Left cardiac atrium (tissue), 4 donors: ENCODE measurements at regions of chr5 and their contacts with region 1.

Region 1: DNA sequence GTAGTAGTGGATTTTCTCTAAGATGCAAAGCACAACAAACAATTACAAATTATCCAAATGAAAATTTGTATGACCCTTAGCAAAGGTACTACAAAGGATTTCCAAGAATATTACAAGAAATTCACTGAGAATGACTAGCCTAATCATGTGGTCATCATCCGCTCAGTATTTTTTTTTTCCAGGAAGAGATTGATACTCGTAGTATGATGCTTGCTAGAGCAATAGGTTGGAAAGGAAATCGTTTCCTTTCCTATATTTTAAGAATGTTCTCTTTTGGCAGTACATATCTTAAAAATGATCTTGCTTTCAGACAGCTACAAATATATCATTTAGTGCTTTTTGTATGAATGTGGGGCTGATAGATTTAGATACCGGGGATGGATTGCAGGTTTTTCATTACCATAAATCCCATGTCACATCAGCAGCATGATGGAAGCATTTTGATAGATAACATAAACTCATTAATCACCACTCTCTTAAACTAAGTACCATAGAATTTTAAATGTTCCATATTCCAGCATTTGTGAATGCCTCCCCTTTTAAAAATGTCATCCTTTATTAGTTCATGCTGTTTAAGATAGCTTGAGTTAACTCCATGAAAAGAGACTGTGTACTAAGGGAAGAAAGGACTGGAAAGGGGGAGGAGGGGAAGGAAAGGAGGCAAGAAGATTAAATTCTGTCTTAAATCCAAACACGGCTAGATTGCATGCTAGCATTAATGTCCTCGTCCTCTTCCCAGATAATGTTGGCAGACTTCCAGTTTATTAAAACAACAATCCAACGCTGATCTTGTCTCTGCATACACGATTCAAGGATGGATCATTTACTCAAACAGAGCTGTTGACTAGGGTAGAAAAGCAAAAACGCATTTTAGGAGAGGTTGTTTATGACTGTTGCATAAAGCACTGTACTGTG is 311.7 kb upstream of the ZNF608 start:
- DNase-seq: no peak
- ATAC-seq: peak in 1 of 2 donors; percentile 38

Region 2: GRCh38 chr5:125180209-125180829 is 122.2 kb after region 1 on chr5:
- intact Hi-C with region 1: loop called in 1 of 2 experiments (anchors 5 kb)
- DNase-seq: no peak
- ATAC-seq: no peak